ENCODE measurements at regions of chr15 and their contacts with region 1.

Region 1: GRCh38 chr15:100902436-100903167 is 16.6 kb upstream of the LRRK1 start:
- DNase-seq: peak; percentile 90
- H3K4me3 ChIP-seq: peak overlapping the region in 1 of 3 experiments; percentile 15
- H3K27ac ChIP-seq: peak overlapping the region; percentile 81
- H3K4me1 ChIP-seq: peaks cover 27% of the 10 kb centered on the region
- H3K27me3 ChIP-seq: no peaks in the 10 kb centered on the region
- CTCF ChIP-seq: no peak
- POLR2A ChIP-seq: no peak

Region 2: DNA sequence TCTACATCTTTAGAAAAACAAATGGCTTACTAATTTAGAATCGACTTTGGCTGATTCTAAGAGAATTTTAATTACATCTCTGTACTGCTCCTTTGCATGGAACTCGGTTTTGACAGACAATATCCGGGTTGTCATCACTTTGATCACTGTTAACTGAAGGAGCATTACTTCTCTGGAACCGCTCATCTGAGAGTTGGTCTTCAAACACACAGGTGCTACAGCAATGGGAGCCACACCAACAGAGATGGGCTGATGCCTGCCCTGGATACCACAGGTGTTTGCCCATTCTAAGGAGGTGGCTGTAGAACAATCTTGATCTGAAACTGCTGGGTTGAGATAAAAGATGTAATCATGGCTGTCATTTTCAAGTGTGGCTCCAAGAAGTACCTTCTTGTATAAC is 322.2 kb before region 1 on chr15:
- CTCF ChIA-PET with region 1: no interaction called
- POLR2A ChIA-PET with region 1: no interaction called
- dilution Hi-C with region 1: no loop called
- intact Hi-C with region 1: no loop called
- DNase-seq: no peak
- H3K4me3 ChIP-seq: no peak overlapping the region
- H3K27ac ChIP-seq: no peak overlapping the region
- H3K4me1 ChIP-seq: no peaks in the 10 kb centered on the region
- H3K27me3 ChIP-seq: no peaks in the 10 kb centered on the region
- CTCF ChIP-seq: no peak
- POLR2A ChIP-seq: no peak

Region 3: GRCh38 chr15:100809151-100809550 is 93.5 kb before region 1 on chr15:
- CTCF ChIA-PET with region 1: no interaction called
- POLR2A ChIA-PET with region 1: no interaction called
- dilution Hi-C with region 1: no loop called
- intact Hi-C with region 1: no loop called
- DNase-seq: peak; percentile 6
- H3K4me3 ChIP-seq: no peak overlapping the region
- H3K27ac ChIP-seq: no peak overlapping the region
- H3K4me1 ChIP-seq: no peaks in the 10 kb centered on the region
- H3K27me3 ChIP-seq: peaks cover 0 to 2% of the 10 kb centered on the region in 2 experiments
- CTCF ChIP-seq: no peak
- POLR2A ChIP-seq: no peak

Region 4: DNA sequence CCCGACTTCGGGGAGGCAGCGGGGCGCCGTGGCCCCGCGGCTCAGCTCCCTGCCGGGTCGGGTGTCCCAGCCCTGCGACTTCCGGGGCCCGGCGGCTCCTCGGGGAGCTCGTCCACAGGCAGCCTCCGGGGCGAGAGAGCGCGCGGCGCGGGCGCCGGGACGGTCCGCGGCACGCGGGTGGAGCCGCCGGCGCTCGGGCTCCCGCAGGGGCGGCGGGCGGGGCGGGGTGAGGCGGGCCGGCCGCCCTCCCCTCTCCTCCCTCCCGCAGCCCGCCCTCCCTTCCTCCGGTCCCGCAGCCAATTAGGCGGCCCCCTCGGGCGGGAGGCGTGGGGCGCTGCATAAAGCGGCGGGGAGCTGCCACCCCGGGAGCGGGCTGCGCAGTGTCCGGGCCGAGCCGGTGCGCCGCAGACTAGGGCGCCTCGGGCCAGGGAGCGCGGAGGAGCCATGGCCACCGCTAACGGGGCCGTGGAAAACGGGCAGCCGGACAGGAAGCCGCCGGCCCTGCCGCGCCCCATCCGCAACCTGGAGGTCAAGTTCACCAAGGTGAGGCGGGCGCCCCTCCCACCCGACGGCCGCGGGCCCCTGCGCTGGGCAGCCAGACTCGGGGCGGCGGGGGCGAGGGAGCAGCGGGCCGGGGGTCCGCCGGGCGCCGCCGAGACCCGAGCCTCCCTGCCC is 23.0 kb before region 1 on chr15 and contains the start of gene ALDH1A3:
- CTCF ChIA-PET with region 1: interaction called, 3 read pairs
- POLR2A ChIA-PET with region 1: no interaction called
- dilution Hi-C with region 1: no loop called
- intact Hi-C with region 1: loop called (anchors 1 kb)
- DNase-seq: no peak
- H3K4me3 ChIP-seq: peak within 1 kb of the TSS; percentile 33 to 45 (median 44)
- H3K27ac ChIP-seq: no peak within 1 kb of the TSS
- H3K4me1 ChIP-seq: peaks cover 3% of the 10 kb centered on the region
- H3K27me3 ChIP-seq: peaks cover 14 to 20% of the 10 kb centered on the region in 2 experiments
- CTCF ChIP-seq: no peak
- POLR2A ChIP-seq: no peak
- total RNA-seq, gene ALDH1A3: 5.8 TPM in 2 replicates

Region 5: DNA sequence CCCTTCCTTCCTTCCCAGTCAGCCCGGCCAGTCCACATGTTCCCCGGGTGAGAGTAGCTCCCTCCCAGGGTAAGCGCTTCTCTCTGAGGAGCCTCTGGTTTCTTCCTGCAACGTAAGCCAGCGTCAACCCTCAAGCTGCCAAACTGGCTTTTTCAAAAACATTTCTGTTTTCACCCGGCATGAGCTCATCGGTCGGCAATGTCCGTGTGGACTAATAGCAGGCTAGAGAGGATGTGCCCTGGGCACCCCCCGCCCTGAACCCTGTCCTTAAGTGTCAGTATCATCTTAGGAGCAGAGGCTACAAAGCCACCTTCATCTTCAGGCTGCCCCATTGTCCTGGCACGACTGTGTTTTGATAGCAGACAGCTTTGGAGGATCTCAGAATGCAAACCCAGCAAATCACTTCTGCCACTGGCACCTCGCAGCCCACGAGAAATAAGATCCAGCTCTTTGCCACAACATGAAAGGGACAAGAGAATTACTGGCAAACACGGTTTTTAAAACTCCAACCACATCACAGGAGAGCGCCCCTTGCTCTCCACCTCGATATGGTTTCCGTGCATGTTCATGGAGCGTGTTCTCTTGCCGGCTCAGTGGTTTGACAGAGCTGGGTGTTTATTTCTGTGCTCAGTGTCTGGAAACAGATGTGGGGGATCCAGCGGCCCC is 13.1 kb before region 1 on chr15:
- CTCF ChIA-PET with region 1: interaction called, 8 read pairs
- POLR2A ChIA-PET with region 1: no interaction called
- dilution Hi-C with region 1: no loop called
- intact Hi-C with region 1: loop called (anchors 1 kb)
- DNase-seq: peak; percentile 85
- H3K4me3 ChIP-seq: peak overlapping the region in 1 of 3 experiments; percentile 3
- H3K27ac ChIP-seq: peak overlapping the region; percentile 43
- H3K4me1 ChIP-seq: peaks cover 35% of the 10 kb centered on the region
- H3K27me3 ChIP-seq: no peaks in the 10 kb centered on the region
- CTCF ChIP-seq: no peak
- POLR2A ChIP-seq: peak; percentile 50

Region 6: DNA sequence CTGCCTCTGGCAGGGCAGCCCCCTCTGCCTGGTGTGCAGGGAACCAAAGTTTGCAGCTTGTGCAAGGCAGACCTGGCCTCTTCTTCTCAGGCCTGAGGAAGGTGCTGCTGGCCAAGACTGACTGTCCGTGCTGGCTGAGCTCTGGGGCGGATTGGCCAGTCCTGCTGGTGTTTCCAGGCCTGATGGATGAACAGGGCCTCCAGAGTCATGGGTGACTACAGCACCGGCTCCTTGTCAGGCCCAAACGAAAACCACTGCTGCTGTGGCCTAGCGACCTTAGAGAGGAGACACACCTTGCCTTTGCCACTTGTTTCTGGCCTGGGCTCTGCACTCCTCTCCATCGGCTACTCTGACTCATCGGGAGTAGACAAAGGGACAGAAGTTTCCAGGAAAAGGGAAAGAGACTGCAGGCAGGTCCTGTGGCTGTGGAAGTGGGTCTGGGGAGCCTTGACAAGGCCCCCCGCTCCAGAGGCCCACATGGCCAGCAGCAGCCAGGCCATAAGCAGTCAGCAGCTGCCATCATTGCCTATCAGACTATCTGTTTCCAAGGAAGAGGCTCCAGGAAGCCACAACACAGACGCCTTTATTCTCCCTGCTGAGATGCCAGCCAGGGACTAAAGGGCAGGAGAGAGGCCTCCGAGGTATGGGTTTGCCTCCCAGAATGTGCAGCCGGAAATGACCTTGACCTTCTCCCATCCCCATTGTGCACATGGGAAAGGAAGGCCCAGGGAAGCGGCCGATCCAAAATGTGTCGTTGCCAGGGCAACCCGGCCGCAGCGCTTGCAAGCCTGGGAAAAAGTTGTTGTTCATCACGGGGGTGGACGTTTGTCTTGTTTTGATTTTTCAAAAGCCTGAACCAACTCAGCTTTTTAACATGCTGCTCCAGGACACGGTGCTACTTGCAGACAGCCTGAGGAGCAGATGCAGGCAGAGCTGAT is 188.7 kb after region 1 on chr15:
- CTCF ChIA-PET with region 1: no interaction called
- POLR2A ChIA-PET with region 1: no interaction called
- dilution Hi-C with region 1: no loop called
- intact Hi-C with region 1: no loop called
- DNase-seq: peak; percentile 86
- H3K4me3 ChIP-seq: no peak overlapping the region
- H3K27ac ChIP-seq: peak overlapping the region; percentile 66
- H3K4me1 ChIP-seq: peaks cover 17% of the 10 kb centered on the region
- H3K27me3 ChIP-seq: peaks cover 0 to 5% of the 10 kb centered on the region in 2 experiments
- CTCF ChIP-seq: no peak
- POLR2A ChIP-seq: no peak

Region 7: GRCh38 chr15:101188637-101189408 is 286.2 kb after region 1 on chr15:
- CTCF ChIA-PET with region 1: no interaction called
- POLR2A ChIA-PET with region 1: no interaction called
- dilution Hi-C with region 1: no loop called
- intact Hi-C with region 1: loop called (anchors 10 kb)
- DNase-seq: peak; percentile 71
- H3K4me3 ChIP-seq: peak overlapping the region in 2 of 3 experiments; percentile 3 to 48
- H3K27ac ChIP-seq: peak overlapping the region; percentile 87
- H3K4me1 ChIP-seq: peaks cover 40% of the 10 kb centered on the region
- H3K27me3 ChIP-seq: no peaks in the 10 kb centered on the region
- CTCF ChIP-seq: no peak
- POLR2A ChIP-seq: no peak

Measured in endothelial cell of umbilical vein (primary cell).